GM12878 (cell line): ENCODE measurements at regions of chr12 and their contacts with region 1.

Region 1: GRCh38 chr12:26732005-26732908 is 100.7 kb downstream of the ITPR2 start:
- DNase-seq: peak; percentile 84
- ATAC-seq: peak; percentile 59
- H3K4me3 ChIP-seq: peak overlapping the region; percentile 13; the same call in 1 of the 2 replicates
- H3K27ac ChIP-seq: peak overlapping the region; percentile 97
- H3K4me1 ChIP-seq: peaks cover 65% of the 10 kb centered on the region
- H3K27me3 ChIP-seq: no peaks in the 10 kb centered on the region
- CTCF ChIP-seq: no peak
- EP300 ChIP-seq: peak; percentile 69 to 89
- POLR2A ChIP-seq: no peak
- RAD21 ChIP-seq: peak; percentile 15; the same call in 1 of the 2 replicates

Region 2: DNA sequence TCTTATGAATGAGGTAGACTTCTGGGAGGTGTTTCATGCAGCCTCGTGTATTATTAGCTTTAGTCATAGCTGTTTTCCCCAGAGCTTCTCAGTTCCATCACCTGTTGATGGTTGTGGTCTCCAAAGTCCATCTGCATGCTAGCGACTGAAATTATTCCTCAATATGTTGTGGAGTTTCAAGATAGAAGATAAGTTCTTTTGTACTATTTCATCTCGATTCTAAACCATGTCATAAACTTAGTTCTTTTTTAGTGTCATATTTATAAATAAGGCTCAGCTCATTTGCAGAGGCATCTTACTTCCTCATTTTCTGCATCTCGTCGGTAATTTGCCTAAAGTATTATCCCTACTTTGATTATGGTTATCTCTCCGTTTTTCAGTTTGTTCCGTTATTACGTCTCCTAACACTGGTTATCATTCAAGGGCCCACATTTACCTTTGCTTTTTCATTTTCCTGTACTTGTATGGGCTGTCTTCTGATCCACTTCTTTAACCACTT is 18.3 kb before region 1 on chr12:
- CTCF ChIA-PET with region 1: interaction called, 7 read pairs
- POLR2A ChIA-PET with region 1: interaction called, 17 read pairs
- RAD21 ChIA-PET with region 1: interaction called, 46 read pairs
- SMC1A ChIA-PET with region 1: interaction called, 91 read pairs
- in situ Hi-C with region 1: no loop called
- intact Hi-C with region 1: loop called (anchors 2 kb)
- DNase-seq: peak; percentile 48
- ATAC-seq: peak; percentile 87
- H3K4me3 ChIP-seq: no peak overlapping the region
- H3K27ac ChIP-seq: peak overlapping the region; percentile 69
- H3K4me1 ChIP-seq: peaks cover 22% of the 10 kb centered on the region
- H3K27me3 ChIP-seq: no peaks in the 10 kb centered on the region
- CTCF ChIP-seq: no peak
- EP300 ChIP-seq: peak in 1 of 2 experiments; percentile 74; a peak in 2 of 4 replicates
- POLR2A ChIP-seq: no peak
- RAD21 ChIP-seq: no peak

Region 3: GRCh38 chr12:26754148-26754547 is 21.9 kb after region 1 on chr12:
- CTCF ChIA-PET with region 1: interaction called, 23 read pairs
- POLR2A ChIA-PET with region 1: interaction called, 14 read pairs
- RAD21 ChIA-PET with region 1: interaction called, 18 read pairs
- SMC1A ChIA-PET with region 1: interaction called, 96 read pairs
- in situ Hi-C with region 1: no loop called
- intact Hi-C with region 1: loop called (anchors 1 kb)
- DNase-seq: no peak
- ATAC-seq: no peak
- H3K4me3 ChIP-seq: no peak overlapping the region
- H3K27ac ChIP-seq: no peak overlapping the region
- H3K4me1 ChIP-seq: peaks cover 32% of the 10 kb centered on the region
- H3K27me3 ChIP-seq: no peaks in the 10 kb centered on the region
- CTCF ChIP-seq: no peak
- EP300 ChIP-seq: no peak
- POLR2A ChIP-seq: no peak
- RAD21 ChIP-seq: no peak

Region 4: GRCh38 chr12:26810330-26810729 is 78.1 kb after region 1 on chr12:
- CTCF ChIA-PET with region 1: no interaction called
- POLR2A ChIA-PET with region 1: no interaction called
- RAD21 ChIA-PET with region 1: no interaction called
- SMC1A ChIA-PET with region 1: interaction called, 19 read pairs
- in situ Hi-C with region 1: no loop called
- intact Hi-C with region 1: no loop called
- DNase-seq: no peak
- ATAC-seq: no peak
- H3K4me3 ChIP-seq: no peak overlapping the region
- H3K27ac ChIP-seq: no peak overlapping the region
- H3K4me1 ChIP-seq: peaks cover 6% of the 10 kb centered on the region; the same call in 1 of the 2 replicates
- H3K27me3 ChIP-seq: no peaks in the 10 kb centered on the region
- CTCF ChIP-seq: no peak
- EP300 ChIP-seq: no peak
- POLR2A ChIP-seq: no peak
- RAD21 ChIP-seq: no peak

Region 5: GRCh38 chr12:26870491-26871419 is 138.5 kb after region 1 on chr12:
- CTCF ChIA-PET with region 1: no interaction called
- POLR2A ChIA-PET with region 1: interaction called, 3 read pairs
- RAD21 ChIA-PET with region 1: interaction called, 4 read pairs
- SMC1A ChIA-PET with region 1: interaction called, 9 read pairs
- in situ Hi-C with region 1: no loop called
- intact Hi-C with region 1: loop called (anchors 2 kb)
- DNase-seq: peak; percentile 35
- ATAC-seq: peak; percentile 33
- H3K4me3 ChIP-seq: no peak overlapping the region
- H3K27ac ChIP-seq: no peak overlapping the region; the same call in 1 of the 2 replicates
- H3K4me1 ChIP-seq: peaks cover 48% of the 10 kb centered on the region
- H3K27me3 ChIP-seq: no peaks in the 10 kb centered on the region
- CTCF ChIP-seq: no peak
- EP300 ChIP-seq: no peak
- POLR2A ChIP-seq: no peak
- RAD21 ChIP-seq: no peak